Activated T-helper 1 cell treated with anti-CD3 and anti-CD28 coated beads, Interleukin-12 subunit alpha, Interleukin-12 subunit beta, Interleukin-2, Interleukin-4 antibody, amounts not matched to agents 30 ng/mL and 10 ng/mL and 1 ng/mL, durations not matched to agents 14 hours and 24 hours and 36 hours (primary cell): ENCODE measurements at regions of chr11 and their contacts with region 1.

Region 1: DNA sequence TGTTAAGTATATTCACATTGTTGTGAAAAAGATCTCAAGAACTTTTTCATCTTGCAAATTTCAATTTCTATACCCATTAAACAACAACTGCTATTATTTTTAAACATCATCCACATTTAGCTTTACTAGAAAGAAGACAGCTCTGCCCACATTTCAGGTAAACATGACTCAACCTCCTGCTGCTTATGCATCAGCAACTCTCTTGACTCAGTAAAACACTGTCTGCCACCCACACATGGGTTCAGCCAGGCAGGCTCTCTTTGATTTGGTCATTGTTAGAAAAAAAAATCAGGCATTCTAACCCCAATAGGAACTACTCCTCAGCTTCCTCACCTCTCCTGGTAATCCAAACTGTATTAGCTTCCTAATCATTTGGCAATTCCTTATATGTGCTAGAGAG is 5.1 kb upstream of the ENDOD1 start:
- DNase-seq: peak; percentile 32
- H3K4me3 Mint-ChIP-seq: no peak overlapping the region
- H3K27ac Mint-ChIP-seq: peak overlapping the region; percentile 40
- H3K4me1 Mint-ChIP-seq: peaks cover 70% of the 10 kb centered on the region
- H3K27me3 Mint-ChIP-seq: no peaks in the 10 kb centered on the region

Region 2: GRCh38 chr11:95095858-95096587 is 11.5 kb after region 1 on chr11:
- intact Hi-C with region 1: loop called (anchors 1 kb)
- DNase-seq: no peak
- H3K4me3 Mint-ChIP-seq: peak overlapping the region; percentile 46
- H3K27ac Mint-ChIP-seq: peak overlapping the region; percentile 67
- H3K4me1 Mint-ChIP-seq: peaks cover 64% of the 10 kb centered on the region
- H3K27me3 Mint-ChIP-seq: no peaks in the 10 kb centered on the region